Ovary (tissue), 10 donors: ENCODE measurements at regions of chr7 and their contacts with region 1.

Region 1: DNA sequence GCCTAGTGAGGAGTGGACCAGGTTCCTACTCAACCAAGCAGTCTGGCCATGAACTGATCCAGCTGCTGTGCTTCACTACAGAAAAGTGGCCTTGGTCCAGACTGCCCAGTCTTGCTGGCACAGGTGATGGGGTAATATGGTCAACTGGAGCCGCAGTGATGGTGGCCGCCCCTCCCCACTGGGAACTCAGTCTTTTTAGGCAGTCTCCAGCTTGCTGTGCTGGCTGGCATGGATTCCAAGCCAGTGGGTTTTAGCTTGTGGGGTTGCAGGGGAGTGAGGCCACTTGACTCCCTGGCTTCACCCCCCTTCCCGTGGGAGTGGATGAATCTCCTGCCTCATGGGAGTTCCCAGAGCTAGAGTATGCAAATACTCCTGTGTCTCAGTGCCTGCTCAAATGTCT is 52.7 kb upstream of the CDK6 start:
- DNase-seq: no peak
- H3K4me3 ChIP-seq: no peak overlapping the region
- H3K27ac ChIP-seq: no peak overlapping the region
- H3K4me1 ChIP-seq: no peaks in the 10 kb centered on the region
- H3K27me3 ChIP-seq: no peaks in the 10 kb centered on the region
- CTCF ChIP-seq: no peak
- EP300 ChIP-seq: no peak
- POLR2A ChIP-seq: no peak

Region 2: GRCh38 chr7:92925876-92926696 is 37.0 kb after region 1 on chr7:
- intact Hi-C with region 1: loop called in 1 of 4 experiments (anchors 2 kb)
- DNase-seq: no peak
- H3K4me3 ChIP-seq: no peak overlapping the region
- H3K27ac ChIP-seq: no peak overlapping the region
- H3K4me1 ChIP-seq: no peaks in the 10 kb centered on the region
- H3K27me3 ChIP-seq: no peaks in the 10 kb centered on the region
- CTCF ChIP-seq: no peak
- EP300 ChIP-seq: no peak
- POLR2A ChIP-seq: no peak